ENCODE measurements at regions of chr12 and their contacts with region 1.

Region 1: DNA sequence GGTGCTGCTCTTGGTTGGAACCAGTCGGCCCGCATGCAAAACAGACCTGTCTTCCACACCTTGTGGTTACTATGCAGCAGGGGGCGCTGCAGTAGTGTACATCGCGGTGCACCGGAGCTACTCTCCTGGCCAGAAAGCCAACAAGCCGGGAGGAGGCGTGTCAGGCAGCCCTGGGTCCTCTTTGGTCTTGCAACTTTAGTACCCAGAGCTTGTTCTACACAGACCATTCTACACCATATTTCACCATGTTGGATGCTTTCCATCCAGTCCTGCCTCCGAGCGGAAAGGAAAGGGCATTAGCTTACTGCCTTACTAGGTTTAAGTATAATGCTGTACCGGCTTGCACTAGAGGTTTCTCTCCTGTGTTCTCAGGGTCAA is 927 bp upstream of the TMTC2 start:
- DNase-seq: peak; percentile 93
- H3K4me3 ChIP-seq: peak overlapping the region; percentile 41 to 81 (median 77)
- H3K27ac ChIP-seq: no peak overlapping the region
- H3K4me1 ChIP-seq: peaks cover 14% of the 10 kb centered on the region
- H3K27me3 ChIP-seq: peaks cover 8 to 12% of the 10 kb centered on the region in 2 experiments
- CTCF ChIP-seq: peak; percentile 81 to 91
- POLR2A ChIP-seq: no peak

Region 2: DNA sequence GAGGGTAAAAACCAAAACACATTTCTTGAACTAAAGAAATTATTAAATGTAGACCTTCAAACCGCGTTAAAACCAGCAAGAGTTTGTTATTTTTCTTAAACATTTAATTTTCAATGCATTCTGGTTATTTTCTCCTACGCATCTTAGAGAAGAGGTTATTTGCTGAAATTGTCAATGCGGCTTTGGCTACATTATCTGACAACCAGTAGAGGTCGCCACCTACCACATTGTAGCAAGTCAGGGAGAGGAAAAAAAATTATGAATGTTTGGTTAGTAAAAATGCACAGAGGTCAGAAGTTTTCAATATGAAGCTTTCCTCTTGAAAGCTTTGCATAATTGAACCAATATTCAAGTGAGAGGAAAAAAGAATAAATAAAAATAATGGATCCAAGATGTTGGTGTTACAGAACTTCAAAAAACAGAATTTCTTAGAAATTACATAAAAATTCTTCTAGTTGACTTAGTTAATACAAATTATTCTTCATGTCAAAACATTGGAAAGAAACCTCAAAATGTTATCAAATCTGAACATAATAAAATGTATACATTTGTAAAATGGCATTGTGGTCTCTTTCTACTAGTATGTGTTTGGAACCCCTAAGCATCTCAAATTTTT is 158.5 kb before region 1 on chr12:
- CTCF ChIA-PET with region 1: interaction called, 13 read pairs
- POLR2A ChIA-PET with region 1: no interaction called
- dilution Hi-C with region 1: no loop called
- intact Hi-C with region 1: loop called (anchors 1 kb)
- DNase-seq: peak; percentile 69
- H3K4me3 ChIP-seq: no peak overlapping the region
- H3K27ac ChIP-seq: no peak overlapping the region
- H3K4me1 ChIP-seq: no peaks in the 10 kb centered on the region
- H3K27me3 ChIP-seq: no peaks in the 10 kb centered on the region
- CTCF ChIP-seq: peak; percentile 70 to 72
- POLR2A ChIP-seq: no peak

Region 3: DNA sequence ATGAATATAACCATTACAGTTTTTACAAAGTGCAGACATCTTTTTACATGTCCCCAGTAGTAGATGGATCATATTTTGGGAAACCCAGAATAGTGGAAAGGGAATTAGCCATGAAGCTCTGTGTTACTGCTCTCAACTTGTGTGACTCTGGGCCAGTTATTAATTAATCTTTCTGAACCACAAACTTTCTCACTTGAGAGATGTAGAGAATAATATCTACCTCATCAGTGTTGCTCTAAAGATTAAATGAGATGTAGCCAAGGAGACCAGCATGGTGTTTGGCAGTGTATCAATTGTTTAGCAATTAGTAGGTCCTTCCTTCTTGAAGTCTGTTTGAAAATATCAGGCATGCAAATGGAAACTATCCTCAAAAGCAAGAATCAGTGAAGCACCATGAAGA is 170.1 kb after region 1 on chr12:
- CTCF ChIA-PET with region 1: interaction called, 4 read pairs
- POLR2A ChIA-PET with region 1: no interaction called
- dilution Hi-C with region 1: no loop called
- intact Hi-C with region 1: loop called (anchors 2 kb)
- DNase-seq: no peak
- H3K4me3 ChIP-seq: no peak overlapping the region
- H3K27ac ChIP-seq: no peak overlapping the region
- H3K4me1 ChIP-seq: peaks cover 24% of the 10 kb centered on the region
- H3K27me3 ChIP-seq: no peaks in the 10 kb centered on the region
- CTCF ChIP-seq: no peak
- POLR2A ChIP-seq: no peak

Region 4: DNA sequence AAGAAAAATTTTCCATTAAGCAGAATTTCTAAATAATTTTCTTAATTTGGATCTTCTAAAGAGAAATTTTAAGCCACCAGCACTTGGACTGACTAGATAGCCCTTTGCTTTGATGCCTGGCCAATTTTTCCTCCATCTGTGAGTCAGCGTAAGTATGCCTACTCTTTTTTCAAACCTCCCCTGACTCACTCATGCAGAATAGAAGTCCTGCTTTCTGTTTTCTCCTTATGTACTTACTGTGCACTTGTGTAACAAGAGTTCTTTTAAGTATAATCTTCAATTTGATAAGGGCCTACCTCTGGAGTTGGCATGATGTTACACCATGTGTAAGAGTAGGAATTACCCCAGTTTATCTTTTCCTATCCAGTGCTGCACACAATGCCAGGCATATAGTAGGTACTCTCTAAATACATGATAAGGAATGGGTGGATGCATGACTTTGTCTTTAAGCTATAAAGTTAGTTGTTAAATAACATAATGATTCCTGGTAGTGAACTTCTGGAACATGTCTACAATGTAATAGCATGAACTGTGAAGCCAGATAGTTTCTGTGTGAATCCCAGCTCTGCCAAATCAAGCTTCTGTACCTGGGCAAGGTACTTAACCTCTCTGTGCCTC is 330.5 kb after region 1 on chr12:
- CTCF ChIA-PET with region 1: interaction called, 5 read pairs
- POLR2A ChIA-PET with region 1: no interaction called
- dilution Hi-C with region 1: no loop called
- intact Hi-C with region 1: loop called (anchors 5 kb)
- DNase-seq: peak; percentile 86
- H3K4me3 ChIP-seq: peak overlapping the region; percentile 24 to 89 (median 82)
- H3K27ac ChIP-seq: peak overlapping the region; percentile 58
- H3K4me1 ChIP-seq: peaks cover 11% of the 10 kb centered on the region
- H3K27me3 ChIP-seq: no peaks in the 10 kb centered on the region
- CTCF ChIP-seq: no peak
- POLR2A ChIP-seq: no peak

Region 5: DNA sequence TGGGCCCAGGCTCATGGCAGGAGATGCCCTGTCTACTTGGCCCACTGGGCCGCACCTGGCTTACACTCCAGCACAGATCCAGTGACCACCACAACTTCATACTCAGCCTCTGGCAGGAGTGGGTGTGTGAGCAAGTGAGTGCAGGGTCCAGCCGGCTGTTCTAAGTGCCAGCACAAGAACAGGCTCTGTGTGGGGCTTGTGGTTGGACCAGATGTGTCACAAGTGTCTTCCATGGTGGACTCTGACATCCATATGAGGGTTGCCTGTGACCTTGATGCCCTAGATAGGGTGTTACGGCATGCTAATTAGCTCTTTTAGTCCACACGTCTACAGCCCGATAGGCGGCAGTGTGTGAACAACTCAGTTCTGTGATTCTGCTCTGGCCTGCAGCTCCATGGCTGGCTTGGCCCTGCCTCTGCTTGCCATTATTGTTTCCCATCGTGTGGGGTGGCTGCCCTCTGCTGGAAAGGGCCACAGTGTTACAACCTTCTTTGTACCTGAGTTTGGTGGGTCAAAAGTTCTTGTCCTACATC is 1137.7 kb after region 1 on chr12:
- CTCF ChIA-PET with region 1: interaction called, 37 read pairs
- POLR2A ChIA-PET with region 1: no interaction called
- dilution Hi-C with region 1: no loop called
- intact Hi-C with region 1: loop called (anchors 1 kb)
- DNase-seq: peak; percentile 1
- H3K4me3 ChIP-seq: no peak overlapping the region
- H3K27ac ChIP-seq: no peak overlapping the region
- H3K4me1 ChIP-seq: no peaks in the 10 kb centered on the region
- H3K27me3 ChIP-seq: no peaks in the 10 kb centered on the region
- CTCF ChIP-seq: peak in 1 of 2 donors; percentile 25
- POLR2A ChIP-seq: no peak

Region 6: GRCh38 chr12:84497819-84498218 is 1812.0 kb after region 1 on chr12:
- CTCF ChIA-PET with region 1: interaction called, 86 read pairs
- POLR2A ChIA-PET with region 1: no interaction called
- dilution Hi-C with region 1: no loop called
- intact Hi-C with region 1: loop called (anchors 1 kb)
- DNase-seq: peak; percentile 7
- H3K4me3 ChIP-seq: no peak overlapping the region
- H3K27ac ChIP-seq: no peak overlapping the region
- H3K4me1 ChIP-seq: peaks cover 6% of the 10 kb centered on the region
- H3K27me3 ChIP-seq: no peaks in the 10 kb centered on the region
- CTCF ChIP-seq: peak; percentile 32 to 49
- POLR2A ChIP-seq: no peak